ENCODE measurements at regions of chr5 and their contacts with region 1.

Region 1: GRCh38 chr5:926417-927171 is 33.9 kb downstream of the TRIP13 start:
- DNase-seq: peak; percentile 79
- CTCF ChIP-seq: peak; percentile 39

Region 2: DNA sequence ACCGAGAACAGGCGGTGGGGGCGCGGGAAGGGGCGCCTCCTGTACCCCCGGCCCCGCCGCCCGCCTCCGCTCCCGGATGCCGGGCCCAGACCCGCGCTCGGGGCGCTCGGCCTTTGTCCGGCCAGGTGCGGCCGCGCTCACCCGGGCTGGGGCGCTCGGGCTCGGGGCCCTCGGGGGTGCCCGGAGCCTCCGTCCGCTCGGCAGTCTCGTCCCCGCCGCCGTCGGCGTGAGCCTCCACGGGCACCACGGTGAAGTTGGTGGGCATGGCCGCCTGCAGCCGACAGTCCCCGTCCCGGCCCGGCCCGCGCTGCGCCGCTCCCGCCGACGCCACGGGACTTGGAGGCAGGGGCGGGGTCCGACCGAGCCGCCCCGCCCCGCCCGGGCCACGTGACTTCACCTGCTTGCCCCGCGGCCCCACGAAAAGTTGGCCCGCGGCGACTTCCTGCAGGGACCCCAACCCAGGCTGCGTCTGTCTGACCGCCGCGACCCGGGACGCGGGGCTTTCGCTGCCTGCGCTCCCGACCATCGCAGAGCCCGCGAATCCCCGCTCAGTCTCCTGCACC is 185.2 kb after region 1 on chr5 and contains the start of gene SLC12A7:
- in situ Hi-C with region 1: loop called (anchors 25 kb)
- DNase-seq: peak; percentile 81
- CTCF ChIP-seq: no peak

Region 3: GRCh38 chr5:1641560-1642166 is 715.1 kb after region 1 on chr5:
- in situ Hi-C with region 1: loop called (anchors 25 kb)
- DNase-seq: peak; percentile 92
- CTCF ChIP-seq: peak; percentile 98